Uterus (tissue), 4 donors: ENCODE measurements at regions of chr17 and their contacts with region 1.

Region 1: DNA sequence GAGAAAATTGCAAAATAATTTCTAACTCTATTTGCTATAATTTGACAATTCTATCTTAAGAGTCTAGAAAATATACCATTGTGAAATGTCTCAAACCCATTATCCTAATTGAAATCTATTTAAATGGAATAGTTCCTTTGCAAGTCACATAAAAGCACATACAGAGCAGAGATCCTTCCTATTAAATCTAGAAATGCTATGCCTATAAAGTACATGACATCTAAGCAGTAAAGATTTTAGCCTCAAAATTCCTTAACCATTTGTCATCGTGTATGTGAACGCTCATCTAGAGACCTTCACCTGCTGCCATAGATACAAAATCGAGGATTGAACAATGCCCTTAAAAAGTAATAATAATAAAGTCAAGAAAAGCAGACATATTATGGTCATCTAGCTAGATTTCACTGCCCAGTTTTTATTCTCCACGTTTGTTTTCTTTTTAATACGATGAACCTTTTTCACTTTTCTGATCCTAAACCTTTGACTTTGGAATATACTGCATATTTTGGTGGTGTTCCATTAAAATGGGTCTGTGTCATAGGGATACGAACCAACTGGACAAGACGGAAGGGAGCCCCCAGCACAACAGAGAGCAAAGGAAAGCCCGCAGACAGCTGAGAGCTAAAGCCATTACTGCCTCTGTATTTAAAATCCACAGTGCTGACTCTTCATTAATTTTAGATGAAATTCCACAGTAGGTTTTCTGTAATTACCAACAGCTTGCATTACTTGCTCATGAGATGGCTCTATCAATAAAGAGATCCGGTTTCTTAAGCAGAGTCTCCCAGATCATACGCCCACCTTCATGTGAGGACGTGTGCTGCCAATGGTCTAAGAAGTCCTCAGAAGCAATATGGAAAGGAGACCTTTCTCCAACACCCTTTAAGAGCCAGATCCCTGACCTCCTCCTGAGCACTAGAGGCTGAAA is 17.6 kb downstream of the TEX2 start:
- DNase-seq: no peak
- H3K4me3 ChIP-seq: no peak overlapping the region
- H3K27ac ChIP-seq: no peak overlapping the region
- H3K4me1 ChIP-seq: peaks cover 0 to 2% of the 10 kb centered on the region in 2 donors
- H3K27me3 ChIP-seq: no peaks in the 10 kb centered on the region
- CTCF ChIP-seq: no peak
- POLR2A ChIP-seq: no peak

Region 2: GRCh38 chr17:63848834-63849700 is 396.4 kb before region 1 on chr17:
- intact Hi-C with region 1: loop called (anchors 5 kb)
- DNase-seq: peak; percentile 84 to 86
- H3K4me3 ChIP-seq: peak overlapping the region; percentile 9 to 27
- H3K27ac ChIP-seq: peak overlapping the region in 1 of 2 donors; percentile 19
- H3K4me1 ChIP-seq: no peaks in the 10 kb centered on the region
- H3K27me3 ChIP-seq: no peaks in the 10 kb centered on the region
- CTCF ChIP-seq: peak; percentile 45 to 70 (median 64)
- POLR2A ChIP-seq: no peak